ENCODE measurements at regions of chr17 and their contacts with region 1.

Region 1: GRCh38 chr17:7583253-7584109 is at the start of gene MPDU1:
- DNase-seq: peak; percentile 84
- ATAC-seq: peak; percentile 77
- H3K4me3 ChIP-seq: peak within 1 kb of the TSS; percentile 75
- H3K27ac ChIP-seq: peak within 1 kb of the TSS; percentile 99
- H3K4me1 ChIP-seq: peaks cover 38% of the 10 kb centered on the region
- H3K27me3 ChIP-seq: no peaks in the 10 kb centered on the region
- CTCF ChIP-seq: no peak
- EP300 ChIP-seq: no peak
- POLR2A ChIP-seq: peak; percentile 96
- RAD21 ChIP-seq: no peak
- polyA plus RNA-seq, gene MPDU1: 3.6 to 11.6 TPM

Region 2: DNA sequence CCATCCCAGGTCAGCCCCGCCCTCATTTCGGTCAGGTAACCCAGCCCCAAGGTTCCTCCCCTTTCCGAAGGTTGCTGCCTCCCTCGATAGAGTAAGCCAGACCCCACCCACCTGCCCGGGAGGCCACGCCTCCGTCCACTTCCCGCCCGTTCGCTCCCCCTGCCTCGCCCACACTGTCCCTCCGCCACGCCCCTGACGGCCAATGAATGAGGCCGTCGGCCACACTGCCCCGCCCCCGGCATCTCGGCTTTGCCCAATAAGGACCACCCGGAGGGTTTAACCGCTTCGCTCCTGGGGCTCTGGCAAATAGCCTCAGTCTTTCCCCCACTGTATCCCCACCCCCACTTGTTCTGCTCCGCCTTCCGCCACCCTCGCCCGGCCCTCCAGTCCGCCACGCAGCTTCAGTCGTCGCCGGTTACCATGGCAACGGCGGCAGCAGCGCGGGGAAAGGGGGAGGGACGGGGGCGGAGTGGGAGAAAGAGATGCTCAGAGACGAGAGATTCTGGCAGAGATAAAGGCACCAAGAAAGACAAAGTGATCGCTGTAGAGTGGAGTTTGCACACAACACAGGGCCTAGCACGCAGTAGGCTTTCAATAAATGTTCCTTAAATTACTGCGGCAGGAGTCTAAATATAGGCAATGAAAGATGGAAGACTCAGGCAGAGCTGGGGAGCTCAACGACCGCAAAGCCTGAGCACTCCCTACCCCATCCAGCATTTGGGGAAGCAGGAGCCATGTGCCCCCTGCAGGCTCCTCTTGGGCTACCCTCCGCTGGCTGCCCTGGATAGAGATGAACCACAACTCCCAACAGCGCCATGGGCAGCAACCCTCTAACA is 369.0 kb before region 1 on chr17:
- CTCF ChIA-PET with region 1: no interaction called
- POLR2A ChIA-PET with region 1: no interaction called
- RAD21 ChIA-PET with region 1: no interaction called
- SMC1A ChIA-PET with region 1: no interaction called
- in situ Hi-C with region 1: no loop called
- intact Hi-C with region 1: no loop called
- DNase-seq: peak; percentile 89
- ATAC-seq: peak; percentile 91
- H3K4me3 ChIP-seq: peak overlapping the region; percentile 72
- H3K27ac ChIP-seq: no peak overlapping the region; the same call in 1 of the 2 replicates
- H3K4me1 ChIP-seq: peaks cover 18% of the 10 kb centered on the region
- H3K27me3 ChIP-seq: no peaks in the 10 kb centered on the region
- CTCF ChIP-seq: peak; percentile 56 to 59 (median 56); a peak in 5 of 6 replicates
- EP300 ChIP-seq: no peak
- POLR2A ChIP-seq: no peak
- RAD21 ChIP-seq: no peak

Region 3: DNA sequence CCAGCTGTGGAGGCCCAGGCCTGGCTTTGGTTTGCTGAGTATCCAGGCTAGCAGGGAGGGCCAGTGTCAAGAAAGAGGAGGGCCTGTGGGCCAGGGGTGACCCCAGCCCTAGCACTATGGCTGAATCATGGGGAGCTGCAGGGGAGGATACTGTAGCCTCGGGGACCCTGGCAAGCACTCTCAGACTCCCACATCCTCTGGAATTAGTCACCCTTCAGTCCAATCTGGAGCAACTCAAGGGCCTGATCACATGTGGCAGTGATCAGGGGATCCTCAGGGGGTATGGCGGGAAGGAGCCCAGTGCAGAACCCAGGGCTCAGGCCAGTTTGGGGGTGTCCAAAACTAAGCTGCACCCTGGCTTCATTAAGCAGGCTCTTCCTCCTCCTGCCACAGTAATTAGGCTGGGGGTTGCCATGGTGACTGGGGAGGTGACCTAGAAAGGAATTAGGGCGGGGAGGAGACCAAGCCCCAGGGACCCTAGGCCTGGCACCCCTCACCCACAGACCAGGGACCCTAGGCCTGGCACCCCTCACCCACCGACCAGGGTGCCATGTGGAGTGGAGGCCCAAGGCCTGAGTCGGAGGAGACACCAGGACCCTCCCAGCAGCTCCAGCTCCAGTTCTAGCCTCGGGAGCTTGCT is 170.0 kb before region 1 on chr17:
- CTCF ChIA-PET with region 1: no interaction called
- POLR2A ChIA-PET with region 1: no interaction called
- RAD21 ChIA-PET with region 1: no interaction called
- SMC1A ChIA-PET with region 1: no interaction called
- in situ Hi-C with region 1: no loop called
- intact Hi-C with region 1: no loop called
- DNase-seq: no peak
- ATAC-seq: no peak
- H3K4me3 ChIP-seq: no peak overlapping the region
- H3K27ac ChIP-seq: no peak overlapping the region
- H3K4me1 ChIP-seq: no peaks in the 10 kb centered on the region
- H3K27me3 ChIP-seq: no peaks in the 10 kb centered on the region; a peak in 2 of 4 replicates
- CTCF ChIP-seq: no peak
- EP300 ChIP-seq: no peak
- POLR2A ChIP-seq: no peak
- RAD21 ChIP-seq: no peak

Region 4: GRCh38 chr17:7493941-7494340 is 89.5 kb before region 1 on chr17:
- CTCF ChIA-PET with region 1: no interaction called
- POLR2A ChIA-PET with region 1: no interaction called
- RAD21 ChIA-PET with region 1: no interaction called
- SMC1A ChIA-PET with region 1: no interaction called
- in situ Hi-C with region 1: no loop called
- intact Hi-C with region 1: no loop called
- DNase-seq: no peak
- ATAC-seq: no peak
- H3K4me3 ChIP-seq: no peak overlapping the region
- H3K27ac ChIP-seq: no peak overlapping the region
- H3K4me1 ChIP-seq: no peaks in the 10 kb centered on the region
- H3K27me3 ChIP-seq: no peaks in the 10 kb centered on the region
- CTCF ChIP-seq: no peak
- EP300 ChIP-seq: no peak
- POLR2A ChIP-seq: no peak
- RAD21 ChIP-seq: no peak

Region 5: GRCh38 chr17:7572588-7573323 is 10.7 kb before region 1 on chr17:
- CTCF ChIA-PET with region 1: interaction called, 9 read pairs
- POLR2A ChIA-PET with region 1: interaction called, 39 read pairs
- RAD21 ChIA-PET with region 1: interaction called, 9 read pairs
- SMC1A ChIA-PET with region 1: interaction called, 9 read pairs
- in situ Hi-C with region 1: no loop called
- intact Hi-C with region 1: no loop called
- DNase-seq: peak; percentile 98
- ATAC-seq: peak; percentile 0
- H3K4me3 ChIP-seq: peak overlapping the region; percentile 93
- H3K27ac ChIP-seq: peak overlapping the region; percentile 97
- H3K4me1 ChIP-seq: peaks cover 21% of the 10 kb centered on the region
- H3K27me3 ChIP-seq: no peaks in the 10 kb centered on the region
- CTCF ChIP-seq: no peak
- EP300 ChIP-seq: no peak
- POLR2A ChIP-seq: peak; percentile 85
- RAD21 ChIP-seq: no peak